ENCODE measurements at regions of chr2 and their contacts with region 1.

Region 1: DNA sequence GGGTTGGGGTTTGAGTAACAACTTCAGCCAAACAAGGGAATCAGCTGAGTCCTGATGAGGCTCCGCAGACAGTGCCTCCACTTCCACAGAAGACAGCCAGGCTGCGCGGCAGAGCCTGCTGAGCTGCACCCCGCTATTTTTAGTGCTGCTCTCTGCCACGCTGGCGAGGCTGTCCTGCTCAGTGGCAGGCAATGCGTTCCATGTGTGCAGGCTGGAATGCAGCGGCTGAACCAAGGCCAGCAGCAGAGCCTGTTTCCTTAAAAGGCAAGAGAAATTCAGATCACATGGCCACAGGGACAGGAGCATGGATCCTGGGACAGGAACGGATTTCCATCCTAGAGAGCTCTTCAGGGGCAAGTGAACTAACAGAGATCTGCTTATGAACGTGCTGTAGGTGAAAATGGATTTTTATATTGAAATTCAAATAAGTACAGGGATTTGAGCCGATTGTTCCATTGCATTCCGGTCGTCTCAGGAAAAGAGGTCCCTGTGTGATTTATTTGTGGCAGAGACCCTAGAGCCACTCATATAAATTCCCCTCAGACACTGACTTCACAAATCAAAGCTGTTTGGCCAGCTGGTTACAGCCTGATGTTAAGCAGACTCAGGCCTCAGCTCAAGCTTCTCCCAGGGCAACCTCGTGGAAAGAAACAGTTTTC is 98.7 kb downstream of the COL6A3 start:
- DNase-seq: peak; percentile 83 to 95
- ATAC-seq: peak; percentile 85 to 97 (median 95)
- H3K4me3 ChIP-seq: no peak overlapping the region
- H3K27ac ChIP-seq: peak overlapping the region; percentile 82
- H3K4me1 ChIP-seq: peaks cover 35% of the 10 kb centered on the region
- H3K27me3 ChIP-seq: no peaks in the 10 kb centered on the region
- CTCF ChIP-seq: peak; percentile 58

Region 2: DNA sequence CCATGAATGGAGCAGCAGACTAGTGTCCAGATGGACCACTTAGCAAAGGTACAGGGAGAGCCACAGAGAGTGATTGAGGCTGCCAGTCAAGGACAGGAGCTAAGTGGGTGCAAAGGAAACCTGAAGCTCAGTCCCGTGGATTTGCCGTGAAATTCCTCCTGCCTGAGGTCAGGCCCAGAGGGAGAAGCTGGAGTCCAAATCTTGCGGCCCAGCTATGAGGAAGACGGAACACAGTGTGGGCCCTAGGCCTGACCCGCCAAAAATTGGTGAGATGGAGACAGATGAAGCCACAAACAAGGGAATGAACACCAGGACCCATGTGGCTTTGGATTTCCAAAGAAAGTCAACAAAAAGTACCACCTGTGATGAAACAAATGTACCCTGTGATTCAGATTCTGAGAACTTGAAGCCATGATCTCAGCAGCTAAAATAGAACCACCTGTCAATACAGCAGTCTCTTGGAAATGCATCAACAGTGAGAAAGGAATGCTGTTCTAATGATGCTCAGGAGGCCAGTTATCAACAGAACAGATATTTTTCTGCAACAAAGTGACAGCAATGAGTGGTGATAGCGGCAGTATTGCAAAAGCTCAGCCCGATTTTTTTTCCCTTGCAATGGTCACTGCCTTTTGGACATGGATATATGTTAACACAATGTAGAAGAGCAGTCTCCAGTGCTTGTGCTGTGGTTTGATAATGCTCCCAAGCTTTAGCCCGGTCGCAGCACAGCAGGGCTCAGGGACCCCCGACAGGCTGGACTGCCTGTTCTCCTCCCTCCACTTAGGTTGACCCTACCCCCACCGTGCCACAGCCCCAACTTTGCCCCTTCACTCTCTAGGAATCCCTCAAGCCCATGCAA is 88.0 kb after region 1 on chr2:
- intact Hi-C with region 1: loop called (anchors 5 to 10 kb)
- DNase-seq: peak; percentile 69 to 78
- ATAC-seq: peak; percentile 84 to 95 (median 92)
- H3K4me3 ChIP-seq: no peak overlapping the region
- H3K27ac ChIP-seq: peak overlapping the region; percentile 89
- H3K4me1 ChIP-seq: peaks cover 26% of the 10 kb centered on the region
- H3K27me3 ChIP-seq: no peaks in the 10 kb centered on the region
- CTCF ChIP-seq: no peak

Region 3: GRCh38 chr2:237408335-237409000 is 93.2 kb after region 1 on chr2:
- intact Hi-C with region 1: loop called (anchors 5 to 10 kb)
- DNase-seq: peak; percentile 56 to 70
- ATAC-seq: peak in 2 of 4 donors; percentile 8 to 11
- H3K4me3 ChIP-seq: peak overlapping the region; percentile 59
- H3K27ac ChIP-seq: peak overlapping the region; percentile 50
- H3K4me1 ChIP-seq: peaks cover 21% of the 10 kb centered on the region
- H3K27me3 ChIP-seq: no peaks in the 10 kb centered on the region
- CTCF ChIP-seq: no peak